ENCODE measurements at regions of chr2 and their contacts with region 1.

Region 1: DNA sequence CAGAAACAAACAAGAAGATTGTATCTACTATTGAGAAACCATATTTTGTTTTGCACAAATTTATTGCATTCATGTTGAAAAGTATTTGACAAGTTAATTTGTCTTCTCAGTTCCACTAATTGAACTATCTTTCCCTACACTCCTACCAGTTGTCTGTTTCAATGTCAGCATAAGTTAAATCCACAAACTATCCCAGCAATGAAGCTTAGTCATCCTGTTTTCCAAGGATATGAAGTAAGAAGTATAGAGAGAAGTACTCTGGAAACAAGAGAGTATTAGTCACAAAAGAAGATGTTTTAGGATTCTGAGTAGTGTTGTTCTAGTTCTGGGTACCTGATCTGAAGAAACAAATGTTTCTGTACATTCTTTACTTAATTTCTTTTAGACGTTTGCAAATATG is 261.6 kb upstream of the ZNF804A start:
- DNase-seq: no peak
- ATAC-seq: no peak
- H3K4me3 ChIP-seq: no peak overlapping the region
- H3K4me3 Mint-ChIP-seq: no peak overlapping the region
- H3K27ac ChIP-seq: no peak overlapping the region
- H3K27ac Mint-ChIP-seq: no peak overlapping the region
- H3K4me1 ChIP-seq: no peaks in the 10 kb centered on the region
- H3K4me1 Mint-ChIP-seq: no peaks in the 10 kb centered on the region
- H3K27me3 ChIP-seq: no peaks in the 10 kb centered on the region
- H3K27me3 Mint-ChIP-seq: no peaks in the 10 kb centered on the region
- CTCF ChIP-seq: no peak

Region 2: GRCh38 chr2:184326066-184326465 is 10.6 kb before region 1 on chr2:
- CTCF ChIA-PET with region 1: no interaction called
- POLR2A ChIA-PET with region 1: no interaction called
- intact Hi-C with region 1: loop called in 1 of 2 experiments (anchors 1 kb)
- DNase-seq: no peak
- ATAC-seq: no peak
- H3K4me3 ChIP-seq: no peak overlapping the region
- H3K4me3 Mint-ChIP-seq: no peak overlapping the region
- H3K27ac ChIP-seq: no peak overlapping the region
- H3K27ac Mint-ChIP-seq: no peak overlapping the region
- H3K4me1 ChIP-seq: no peaks in the 10 kb centered on the region
- H3K4me1 Mint-ChIP-seq: no peaks in the 10 kb centered on the region
- H3K27me3 ChIP-seq: no peaks in the 10 kb centered on the region
- H3K27me3 Mint-ChIP-seq: no peaks in the 10 kb centered on the region
- CTCF ChIP-seq: no peak

Measured in CD8-positive, alpha-beta T cell (primary cell).